ENCODE measurements at regions of chr10 and their contacts with region 1.

Region 1: GRCh38 chr10:18104223-18104872 is 35.9 kb upstream of the CACNB2 start:
- DNase-seq: peak; percentile 75
- H3K4me3 ChIP-seq: no peak overlapping the region
- H3K27ac ChIP-seq: no peak overlapping the region
- H3K4me1 ChIP-seq: peaks cover 4% of the 10 kb centered on the region
- H3K27me3 ChIP-seq: no peaks in the 10 kb centered on the region
- CTCF ChIP-seq: peak; percentile 89

Region 2: DNA sequence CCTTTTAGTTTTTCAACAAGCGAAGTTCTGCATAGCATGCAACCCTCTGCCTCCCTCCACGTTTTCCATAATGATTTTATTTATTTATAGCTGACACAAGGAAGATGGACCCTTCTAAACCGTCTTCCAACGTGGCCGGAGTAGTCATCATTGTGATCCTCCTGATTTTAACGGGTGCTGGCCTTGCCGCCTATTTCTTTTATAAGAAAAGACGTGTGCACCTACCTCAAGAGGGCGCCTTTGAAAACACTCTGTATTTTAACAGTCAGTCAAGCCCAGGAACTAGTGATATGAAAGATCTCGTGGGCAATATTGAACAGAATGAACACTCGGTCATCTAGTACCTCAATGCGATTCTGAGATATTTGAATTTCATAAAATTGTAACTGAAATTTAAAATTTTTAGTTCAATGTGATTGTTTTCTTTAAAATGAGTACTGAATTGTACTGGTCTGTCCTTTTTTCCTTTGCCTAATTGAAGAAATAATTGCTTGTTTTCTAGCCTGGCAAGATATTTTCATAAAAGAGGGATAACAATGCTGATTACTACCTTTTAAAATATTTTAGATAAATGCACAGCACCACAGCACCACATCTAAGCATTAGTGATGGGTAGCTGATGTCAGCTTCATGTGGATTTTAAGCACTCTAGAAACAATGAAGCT is 194.1 kb before region 1 on chr10:
- CTCF ChIA-PET with region 1: no interaction called
- POLR2A ChIA-PET with region 1: no interaction called
- intact Hi-C with region 1: loop called (anchors 1 kb)
- DNase-seq: peak; percentile 86
- H3K4me3 ChIP-seq: no peak overlapping the region
- H3K27ac ChIP-seq: no peak overlapping the region
- H3K4me1 ChIP-seq: peaks cover 3% of the 10 kb centered on the region
- H3K27me3 ChIP-seq: no peaks in the 10 kb centered on the region
- CTCF ChIP-seq: peak; percentile 87

Region 3: GRCh38 chr10:17965649-17966235 is 138.6 kb before region 1 on chr10:
- CTCF ChIA-PET with region 1: no interaction called
- POLR2A ChIA-PET with region 1: no interaction called
- intact Hi-C with region 1: no loop called
- DNase-seq: no peak
- H3K4me3 ChIP-seq: no peak overlapping the region
- H3K27ac ChIP-seq: no peak overlapping the region
- H3K4me1 ChIP-seq: no peaks in the 10 kb centered on the region
- H3K27me3 ChIP-seq: no peaks in the 10 kb centered on the region
- CTCF ChIP-seq: no peak